ENCODE measurements at regions of chr10 and their contacts with region 1.

Region 1: GRCh38 chr10:55369670-55370420 is 568.8 kb upstream of the PCDH15 start:
- DNase-seq: peak; percentile 29
- H3K4me3 ChIP-seq: no peak overlapping the region
- H3K27ac ChIP-seq: peak overlapping the region; percentile 47 to 98; a peak in 3 of 4 replicates
- H3K4me1 ChIP-seq: peaks cover 0 to 19% of the 10 kb centered on the region in 2 experiments; a peak in 2 of 4 replicates
- H3K27me3 ChIP-seq: no peaks in the 10 kb centered on the region
- CTCF ChIP-seq: no peak
- EP300 ChIP-seq: peak; percentile 91 to 95
- RAD21 ChIP-seq: peak; percentile 37

Region 2: DNA sequence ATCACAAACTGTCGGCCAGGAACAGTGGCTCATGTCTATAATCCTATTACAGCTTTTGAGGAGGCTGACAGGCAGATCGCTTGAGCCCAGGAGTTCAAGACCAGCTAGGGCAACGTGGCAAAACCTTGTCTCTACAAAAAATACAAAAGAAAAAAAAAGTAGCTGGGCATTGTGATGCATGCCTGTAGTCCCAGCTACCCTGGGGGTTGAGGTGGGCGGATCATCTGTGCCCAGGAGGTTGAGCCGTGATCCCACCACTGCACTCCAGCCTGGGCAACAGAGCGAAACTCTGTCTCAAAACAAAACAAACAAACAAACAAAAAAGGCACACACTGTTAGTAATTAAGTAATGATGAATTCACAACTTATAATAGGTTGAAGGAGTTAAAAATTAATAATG is 127.3 kb before region 1 on chr10:
- CTCF ChIA-PET with region 1: no interaction called
- POLR2A ChIA-PET with region 1: no interaction called
- DNase-seq: no peak
- H3K4me3 ChIP-seq: no peak overlapping the region
- H3K27ac ChIP-seq: no peak overlapping the region
- H3K4me1 ChIP-seq: peaks cover 0 to 1% of the 10 kb centered on the region in 2 experiments; a peak in 2 of 4 replicates
- H3K27me3 ChIP-seq: no peaks in the 10 kb centered on the region
- CTCF ChIP-seq: no peak
- EP300 ChIP-seq: no peak
- RAD21 ChIP-seq: no peak

Region 3: GRCh38 chr10:55410415-55410885 is 40.6 kb after region 1 on chr10:
- CTCF ChIA-PET with region 1: interaction called, 10 read pairs
- POLR2A ChIA-PET with region 1: no interaction called
- DNase-seq: peak; percentile 51
- H3K4me3 ChIP-seq: peak overlapping the region; percentile 17 to 18; a peak in 1 of 4 replicates
- H3K27ac ChIP-seq: peak overlapping the region; percentile 50 to 98
- H3K4me1 ChIP-seq: peaks cover 5 to 13% of the 10 kb centered on the region in 2 experiments; a peak in 2 of 4 replicates
- H3K27me3 ChIP-seq: no peaks in the 10 kb centered on the region
- CTCF ChIP-seq: peak; percentile 52
- EP300 ChIP-seq: peak in 1 of 2 experiments; percentile 89; a peak in 3 of 4 replicates
- RAD21 ChIP-seq: peak; percentile 91